ENCODE measurements at regions of chr7 and their contacts with region 1.

Region 1: GRCh38 chr7:38369816-38370493 is 96.5 kb upstream of the TARP start:
- DNase-seq: no peak
- ATAC-seq: peak; percentile 87
- H3K4me3 ChIP-seq: no peak overlapping the region
- H3K27ac ChIP-seq: peak overlapping the region; percentile 22; the same call in 1 of the 2 replicates
- H3K4me1 ChIP-seq: peaks cover 31% of the 10 kb centered on the region
- H3K27me3 ChIP-seq: no peaks in the 10 kb centered on the region
- CTCF ChIP-seq: peak; percentile 81 to 99 (median 96)
- EP300 ChIP-seq: no peak
- POLR2A ChIP-seq: no peak
- RAD21 ChIP-seq: no peak

Region 2: GRCh38 chr7:38107486-38107893 is 262.5 kb before region 1 on chr7:
- CTCF ChIA-PET with region 1: interaction called, 31 read pairs
- POLR2A ChIA-PET with region 1: no interaction called
- RAD21 ChIA-PET with region 1: interaction called, 8 read pairs
- SMC1A ChIA-PET with region 1: interaction called, 23 read pairs
- in situ Hi-C with region 1: no loop called
- intact Hi-C with region 1: no loop called
- DNase-seq: peak; percentile 44
- ATAC-seq: peak; percentile 97
- H3K4me3 ChIP-seq: no peak overlapping the region
- H3K27ac ChIP-seq: no peak overlapping the region
- H3K4me1 ChIP-seq: no peaks in the 10 kb centered on the region; the same call in 1 of the 2 replicates
- H3K27me3 ChIP-seq: no peaks in the 10 kb centered on the region
- CTCF ChIP-seq: peak; percentile 76 to 93 (median 81)
- EP300 ChIP-seq: no peak
- POLR2A ChIP-seq: no peak
- RAD21 ChIP-seq: peak; percentile 99

Region 3: GRCh38 chr7:38232502-38233366 is 137.2 kb before region 1 on chr7:
- CTCF ChIA-PET with region 1: interaction called, 13 read pairs
- POLR2A ChIA-PET with region 1: no interaction called
- RAD21 ChIA-PET with region 1: interaction called, 3 read pairs
- SMC1A ChIA-PET with region 1: interaction called, 3 read pairs
- in situ Hi-C with region 1: no loop called
- intact Hi-C with region 1: no loop called
- DNase-seq: peak; percentile 82
- ATAC-seq: peak; percentile 96
- H3K4me3 ChIP-seq: no peak overlapping the region
- H3K27ac ChIP-seq: 0 out of 2 replicates have a peak overlapping the region, but pooled peaks have one; percentile 34
- H3K4me1 ChIP-seq: peaks cover 14% of the 10 kb centered on the region
- H3K27me3 ChIP-seq: no peaks in the 10 kb centered on the region
- CTCF ChIP-seq: peak in 1 of 3 experiments; percentile 17; a peak in 1 of 6 replicates
- EP300 ChIP-seq: peak in 1 of 2 experiments; percentile 82
- POLR2A ChIP-seq: no peak
- RAD21 ChIP-seq: no peak

Region 4: GRCh38 chr7:38262545-38262944 is 107.4 kb before region 1 on chr7:
- CTCF ChIA-PET with region 1: no interaction called
- POLR2A ChIA-PET with region 1: no interaction called
- RAD21 ChIA-PET with region 1: no interaction called
- SMC1A ChIA-PET with region 1: no interaction called
- in situ Hi-C with region 1: no loop called
- intact Hi-C with region 1: no loop called
- DNase-seq: no peak
- ATAC-seq: no peak
- H3K4me3 ChIP-seq: no peak overlapping the region
- H3K27ac ChIP-seq: no peak overlapping the region
- H3K4me1 ChIP-seq: no peaks in the 10 kb centered on the region
- H3K27me3 ChIP-seq: no peaks in the 10 kb centered on the region
- CTCF ChIP-seq: no peak
- EP300 ChIP-seq: no peak
- POLR2A ChIP-seq: no peak
- RAD21 ChIP-seq: no peak

Region 5: GRCh38 chr7:38318803-38319416 is 51.0 kb before region 1 on chr7:
- CTCF ChIA-PET with region 1: interaction called, 79 read pairs
- POLR2A ChIA-PET with region 1: no interaction called
- RAD21 ChIA-PET with region 1: interaction called, 3 read pairs
- SMC1A ChIA-PET with region 1: interaction called, 8 read pairs
- in situ Hi-C with region 1: no loop called
- intact Hi-C with region 1: no loop called
- DNase-seq: no peak
- ATAC-seq: peak; percentile 96
- H3K4me3 ChIP-seq: no peak overlapping the region
- H3K27ac ChIP-seq: no peak overlapping the region
- H3K4me1 ChIP-seq: no peaks in the 10 kb centered on the region
- H3K27me3 ChIP-seq: no peaks in the 10 kb centered on the region
- CTCF ChIP-seq: peak; percentile 74 to 88 (median 82)
- EP300 ChIP-seq: no peak
- POLR2A ChIP-seq: no peak
- RAD21 ChIP-seq: peak; percentile 93

Region 6: DNA sequence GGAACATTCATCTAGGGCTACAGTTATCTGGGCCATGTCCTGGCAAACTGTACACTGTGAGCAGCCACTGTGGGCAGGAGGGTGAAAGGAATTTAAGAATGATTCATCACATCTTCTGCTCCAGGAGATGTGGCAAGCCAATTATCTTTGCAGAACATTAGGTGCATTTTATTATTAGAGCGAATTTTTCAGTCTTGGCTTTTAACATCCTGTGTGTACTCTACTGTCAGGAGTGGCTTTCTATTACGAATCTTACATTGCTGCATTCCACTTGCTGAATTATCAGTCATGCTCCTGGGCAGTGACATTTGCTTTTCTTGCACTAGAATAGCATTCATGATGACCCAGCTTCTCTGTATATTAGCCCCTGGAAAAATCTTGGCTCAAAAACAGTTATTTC is 12.7 kb after region 1 on chr7:
- CTCF ChIA-PET with region 1: interaction called, 45 read pairs
- POLR2A ChIA-PET with region 1: no interaction called
- RAD21 ChIA-PET with region 1: interaction called, 3 read pairs
- SMC1A ChIA-PET with region 1: interaction called, 8 read pairs
- in situ Hi-C with region 1: no loop called
- intact Hi-C with region 1: no loop called
- DNase-seq: no peak
- ATAC-seq: no peak
- H3K4me3 ChIP-seq: no peak overlapping the region
- H3K27ac ChIP-seq: no peak overlapping the region
- H3K4me1 ChIP-seq: no peaks in the 10 kb centered on the region
- H3K27me3 ChIP-seq: no peaks in the 10 kb centered on the region
- CTCF ChIP-seq: no peak
- EP300 ChIP-seq: no peak
- POLR2A ChIP-seq: no peak
- RAD21 ChIP-seq: no peak

Region 7: DNA sequence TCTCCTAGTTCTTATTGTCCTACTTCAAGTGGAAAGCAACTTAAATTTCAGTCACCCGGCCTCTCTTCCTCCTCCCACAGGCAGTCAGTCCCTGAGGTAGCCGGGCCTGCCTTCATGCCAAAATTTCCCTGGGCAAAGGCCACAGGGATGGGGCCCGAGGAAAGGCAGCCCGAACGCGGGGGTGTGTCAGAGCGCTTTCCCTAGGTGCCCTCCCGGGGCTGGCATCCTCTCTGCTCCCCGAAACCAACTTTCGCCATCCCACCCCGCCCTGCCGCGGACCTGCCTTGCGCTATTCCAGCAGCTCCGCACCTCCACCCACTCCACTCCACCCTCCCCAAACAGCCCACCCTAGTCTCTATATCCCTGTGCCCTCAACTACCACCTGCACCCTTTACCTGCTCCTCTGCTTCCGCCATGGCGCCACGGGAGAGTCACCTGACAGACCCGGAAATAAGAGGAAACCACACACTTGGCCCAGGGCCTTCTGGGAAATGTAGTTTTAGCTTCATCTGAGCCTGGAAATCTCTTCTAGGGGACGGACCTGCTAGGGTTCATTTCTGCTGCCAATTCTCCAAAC is 538.9 kb after region 1 on chr7 and contains the start of gene VPS41:
- CTCF ChIA-PET with region 1: no interaction called
- POLR2A ChIA-PET with region 1: no interaction called
- RAD21 ChIA-PET with region 1: no interaction called
- SMC1A ChIA-PET with region 1: no interaction called
- in situ Hi-C with region 1: no loop called
- intact Hi-C with region 1: loop called (anchors 5 kb)
- DNase-seq: peak; percentile 51
- ATAC-seq: peak; percentile 92
- H3K4me3 ChIP-seq: peak within 1 kb of the TSS; percentile 89
- H3K27ac ChIP-seq: peak within 1 kb of the TSS; percentile 59
- H3K4me1 ChIP-seq: peaks cover 14% of the 10 kb centered on the region
- H3K27me3 ChIP-seq: no peaks in the 10 kb centered on the region
- CTCF ChIP-seq: no peak
- EP300 ChIP-seq: no peak
- POLR2A ChIP-seq: peak; percentile 78
- RAD21 ChIP-seq: no peak
- polyA plus RNA-seq, gene VPS41: 15.3 to 38.8 TPM